GM12878 (cell line): ENCODE measurements at regions of chr10 and their contacts with region 1.

Region 1: DNA sequence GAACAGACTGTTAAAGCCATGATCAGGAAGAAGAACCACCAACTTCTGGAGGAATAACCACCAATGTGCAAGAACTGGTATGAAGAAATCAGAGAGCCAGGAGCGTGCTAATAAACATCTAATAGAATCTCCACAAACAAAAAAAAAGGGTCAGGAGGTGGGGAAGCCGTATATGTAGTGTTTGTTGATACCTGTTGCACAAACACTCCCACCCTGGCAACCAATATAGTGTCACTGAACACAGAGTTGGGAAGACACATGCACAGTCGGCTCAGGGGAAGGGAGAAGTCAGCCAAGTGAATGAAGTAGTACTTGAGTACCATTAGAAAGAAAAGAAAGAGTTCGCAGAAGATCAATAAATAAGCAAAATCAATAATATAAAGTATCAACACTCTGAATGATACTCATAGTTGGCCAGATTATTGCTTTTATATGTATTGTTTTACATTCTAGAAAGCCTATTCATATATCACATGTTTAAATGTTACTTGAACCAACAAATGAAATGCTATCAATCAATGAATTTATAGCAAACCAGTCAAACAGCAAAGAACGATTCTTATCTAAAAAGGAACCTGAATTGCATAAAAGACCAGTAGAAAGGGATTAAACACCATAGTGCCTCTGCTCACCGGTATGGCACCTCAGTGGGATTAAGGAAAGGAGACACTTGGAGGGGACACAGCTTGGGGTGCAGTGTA is 399.9 kb downstream of the PARD3 start:
- DNase-seq: no peak
- ATAC-seq: no peak
- H3K4me3 ChIP-seq: no peak overlapping the region
- H3K27ac ChIP-seq: no peak overlapping the region
- H3K4me1 ChIP-seq: no peaks in the 10 kb centered on the region; the same call in 1 of the 2 replicates
- H3K27me3 ChIP-seq: no peaks in the 10 kb centered on the region
- CTCF ChIP-seq: no peak
- EP300 ChIP-seq: no peak
- POLR2A ChIP-seq: no peak
- RAD21 ChIP-seq: no peak

Region 2: DNA sequence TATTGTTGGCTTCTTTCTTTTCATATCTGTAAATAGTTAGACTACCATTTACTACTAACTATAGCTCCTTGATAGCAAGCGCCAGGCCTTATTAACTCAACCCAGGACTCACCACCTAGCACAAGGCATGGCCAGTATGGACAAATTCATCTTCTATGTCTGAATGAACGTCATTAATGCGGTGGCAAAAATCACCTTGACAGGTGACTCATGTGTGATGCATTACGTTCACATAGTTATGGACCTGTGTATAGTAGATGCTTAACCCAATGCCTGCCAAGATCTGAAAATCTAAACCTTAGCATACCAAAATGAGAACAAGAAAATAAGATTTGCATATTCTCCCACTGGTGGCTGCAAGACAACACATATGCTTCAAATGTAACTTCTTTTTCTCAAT is 99.1 kb after region 1 on chr10:
- CTCF ChIA-PET with region 1: no interaction called
- POLR2A ChIA-PET with region 1: no interaction called
- RAD21 ChIA-PET with region 1: no interaction called
- SMC1A ChIA-PET with region 1: no interaction called
- in situ Hi-C with region 1: no loop called
- intact Hi-C with region 1: no loop called
- DNase-seq: no peak
- ATAC-seq: peak; percentile 21; the same call in 2 of the 3 replicates
- H3K4me3 ChIP-seq: no peak overlapping the region
- H3K27ac ChIP-seq: no peak overlapping the region
- H3K4me1 ChIP-seq: no peaks in the 10 kb centered on the region
- H3K27me3 ChIP-seq: no peaks in the 10 kb centered on the region; a peak in 1 of 4 replicates
- CTCF ChIP-seq: no peak
- EP300 ChIP-seq: no peak
- POLR2A ChIP-seq: no peak
- RAD21 ChIP-seq: no peak

Region 3: DNA sequence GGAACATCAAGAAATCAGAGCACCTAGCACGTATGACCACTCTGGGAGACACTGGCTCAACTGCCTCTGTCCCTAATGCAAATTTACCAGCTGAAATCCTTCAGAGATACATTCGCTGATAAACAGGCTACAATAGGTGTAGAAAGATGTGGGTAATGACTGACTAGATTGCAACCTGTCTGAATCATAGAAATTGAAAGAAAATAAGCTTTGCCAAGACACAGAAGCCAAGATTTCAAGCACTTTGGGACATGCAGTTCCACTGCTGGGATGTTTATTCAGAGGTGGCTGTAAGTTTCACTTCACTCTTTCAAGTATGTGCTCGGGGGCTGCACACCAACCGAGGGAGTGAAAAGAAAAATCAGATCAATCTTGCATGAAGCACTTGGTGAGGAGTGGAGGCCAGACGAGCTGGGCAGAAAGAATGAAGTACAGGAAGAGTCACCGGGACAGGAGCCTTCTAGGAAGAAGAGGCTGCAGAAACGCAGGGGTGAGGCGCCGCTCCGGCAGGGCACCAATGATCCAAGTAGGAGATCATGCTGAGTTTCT is 123.2 kb after region 1 on chr10:
- CTCF ChIA-PET with region 1: no interaction called
- POLR2A ChIA-PET with region 1: no interaction called
- RAD21 ChIA-PET with region 1: interaction called, 3 read pairs
- SMC1A ChIA-PET with region 1: no interaction called
- in situ Hi-C with region 1: no loop called
- intact Hi-C with region 1: loop called (anchors 5 kb)
- DNase-seq: peak; percentile 57
- ATAC-seq: peak; percentile 77
- H3K4me3 ChIP-seq: peak overlapping the region; percentile 31; the same call in 1 of the 2 replicates
- H3K27ac ChIP-seq: peak overlapping the region; percentile 39
- H3K4me1 ChIP-seq: peaks cover 18% of the 10 kb centered on the region
- H3K27me3 ChIP-seq: no peaks in the 10 kb centered on the region
- CTCF ChIP-seq: no peak
- EP300 ChIP-seq: no peak
- POLR2A ChIP-seq: no peak
- RAD21 ChIP-seq: no peak

Region 4: DNA sequence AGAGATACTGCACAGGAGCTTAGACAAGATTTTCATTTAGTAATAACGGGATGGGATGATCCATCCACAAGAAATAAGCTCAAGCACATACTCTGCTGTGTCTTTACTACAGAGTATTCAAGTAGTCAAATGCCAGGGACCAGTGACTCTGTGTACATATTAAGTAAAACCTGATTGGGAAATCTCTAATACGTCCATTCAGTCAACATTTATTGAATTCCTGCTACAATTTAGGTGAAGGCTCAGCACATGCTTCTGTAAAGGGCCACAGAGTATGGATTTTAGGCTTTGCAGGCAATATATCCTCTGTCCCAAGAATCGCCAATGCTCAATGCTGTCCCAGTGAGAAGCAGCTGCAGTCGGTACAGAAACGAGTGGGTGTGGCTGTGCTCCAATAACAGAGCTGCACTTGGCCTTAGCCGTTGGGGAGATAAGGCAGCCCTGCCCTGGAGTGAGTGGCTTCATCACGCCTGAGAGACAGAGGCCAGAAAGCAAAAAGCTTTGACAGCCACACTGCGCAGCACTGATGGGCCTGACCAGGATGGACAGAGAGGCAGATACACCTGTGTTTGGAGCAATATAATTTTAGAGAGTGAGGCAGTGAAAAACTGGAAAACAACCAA is 213.1 kb after region 1 on chr10:
- CTCF ChIA-PET with region 1: no interaction called
- POLR2A ChIA-PET with region 1: no interaction called
- RAD21 ChIA-PET with region 1: no interaction called
- SMC1A ChIA-PET with region 1: no interaction called
- in situ Hi-C with region 1: no loop called
- intact Hi-C with region 1: no loop called
- DNase-seq: no peak
- ATAC-seq: peak; percentile 10; the same call in 1 of the 3 replicates
- H3K4me3 ChIP-seq: no peak overlapping the region
- H3K27ac ChIP-seq: no peak overlapping the region
- H3K4me1 ChIP-seq: no peaks in the 10 kb centered on the region
- H3K27me3 ChIP-seq: no peaks in the 10 kb centered on the region
- CTCF ChIP-seq: no peak
- EP300 ChIP-seq: no peak
- POLR2A ChIP-seq: no peak
- RAD21 ChIP-seq: no peak